ENCODE measurements at regions of chr12 and their contacts with region 1.

Region 1: DNA sequence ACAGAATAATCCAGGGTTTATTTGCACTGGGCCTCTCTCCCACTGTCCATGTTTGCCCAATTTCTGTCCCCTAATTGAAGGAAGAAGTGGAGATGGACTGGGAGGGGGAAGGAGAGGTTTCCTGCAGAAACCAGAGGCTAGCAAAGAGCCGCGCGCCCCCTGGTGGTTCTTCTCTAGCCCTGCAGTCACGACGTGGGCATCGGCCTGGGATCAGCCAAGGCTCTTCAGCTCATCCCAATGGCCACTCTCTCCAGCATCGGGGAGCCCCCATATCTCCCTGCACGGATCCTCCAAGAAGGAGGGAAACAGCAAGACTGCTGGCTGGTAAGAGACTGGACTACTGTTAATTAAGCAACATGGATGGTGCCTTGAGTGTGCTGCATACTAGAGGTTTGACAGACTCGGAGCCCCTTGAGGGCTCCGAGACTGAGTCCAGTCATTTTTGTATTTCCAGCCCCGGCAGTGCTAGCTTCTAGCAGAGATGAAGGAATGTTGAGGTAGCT is 18.7 kb downstream of the ZBTB39 start:
- DNase-seq: peak; percentile 87

Region 2: GRCh38 chr12:56593909-56594621 is 393.5 kb before region 1 on chr12:
- CTCF ChIA-PET with region 1: no interaction called
- POLR2A ChIA-PET with region 1: no interaction called
- DNase-seq: peak; percentile 77

Region 3: DNA sequence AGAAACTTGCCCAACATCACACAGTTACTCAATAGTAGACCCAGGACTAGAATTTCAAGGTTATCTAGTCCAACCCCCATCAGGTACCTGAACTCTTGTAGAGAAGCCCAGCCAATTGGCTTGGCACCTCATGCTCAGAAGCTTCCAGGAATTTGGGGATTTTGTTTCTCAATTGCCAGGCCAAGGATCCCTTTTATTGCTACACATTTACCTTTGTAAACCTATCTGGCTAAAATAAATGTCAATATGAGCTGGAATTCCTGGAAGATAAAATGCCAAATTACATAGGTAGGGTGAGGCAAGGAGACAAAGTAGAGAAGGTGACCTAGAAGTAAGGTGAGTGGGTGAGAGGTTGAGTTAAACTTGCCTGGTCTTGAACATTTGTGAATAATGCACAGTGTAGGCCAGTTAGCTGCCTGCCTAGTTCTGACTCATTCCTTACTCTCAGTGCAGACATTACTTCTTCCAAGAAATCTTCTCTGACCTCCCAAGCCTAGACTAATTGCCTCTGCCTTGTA is 89.7 kb before region 1 on chr12:
- CTCF ChIA-PET with region 1: no interaction called
- POLR2A ChIA-PET with region 1: no interaction called
- DNase-seq: no peak

Region 4: GRCh38 chr12:57001448-57001906 is 13.9 kb after region 1 on chr12:
- CTCF ChIA-PET with region 1: interaction called, 14 read pairs
- POLR2A ChIA-PET with region 1: no interaction called
- DNase-seq: peak; percentile 81